ENCODE measurements at regions of chr12 and their contacts with region 1.

Region 1: DNA sequence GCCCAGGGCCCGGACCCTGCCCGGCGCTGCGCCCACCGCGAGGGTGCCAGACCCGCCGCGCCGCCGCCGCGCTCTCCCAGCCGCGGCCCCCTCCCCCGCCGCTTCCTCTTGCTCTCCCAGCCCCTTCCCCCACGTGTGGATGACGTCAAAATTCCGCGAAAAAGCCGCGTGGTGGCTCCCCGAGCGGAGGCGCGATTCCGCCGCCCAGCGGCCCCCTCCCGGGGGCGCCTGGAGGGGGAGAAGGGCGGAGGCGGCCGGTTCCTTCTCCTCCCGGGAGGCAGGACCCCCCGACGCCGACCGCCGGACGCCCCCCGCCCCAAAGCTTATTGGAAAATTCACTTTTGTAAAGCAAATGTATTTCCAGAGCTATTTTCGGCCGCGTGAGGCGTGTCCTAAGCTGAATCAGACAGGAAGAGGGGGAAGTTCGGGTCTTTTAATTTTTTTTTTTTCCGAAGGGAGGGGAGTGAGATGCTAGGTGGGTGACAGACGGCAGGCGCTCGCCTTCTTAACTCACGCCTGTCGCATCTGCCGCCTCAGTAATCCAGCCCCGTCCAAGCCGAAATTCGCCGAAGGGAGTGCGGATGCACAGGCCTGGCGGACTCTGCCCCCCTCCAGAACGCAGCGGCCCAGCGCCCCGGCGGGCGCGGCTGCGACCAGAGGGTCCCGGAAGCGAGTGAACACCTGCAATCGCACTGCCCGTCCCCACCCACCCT is 4.1 kb upstream of the CCND2 start:
- DNase-seq: peak; percentile 96
- ATAC-seq: peak; percentile 42
- H3K4me3 ChIP-seq: peak overlapping the region; percentile 64 to 90 (median 77)
- H3K4me3 Mint-ChIP-seq: peak overlapping the region; percentile 99
- H3K27ac ChIP-seq: peak overlapping the region; percentile 97 to 99
- H3K27ac Mint-ChIP-seq: peak overlapping the region; percentile 99
- H3K4me1 ChIP-seq: peaks cover 19 to 39% of the 10 kb centered on the region in 2 donors
- H3K4me1 Mint-ChIP-seq: peaks cover 28% of the 10 kb centered on the region
- H3K27me3 ChIP-seq: no peaks in the 10 kb centered on the region
- H3K27me3 Mint-ChIP-seq: no peaks in the 10 kb centered on the region
- CTCF ChIP-seq: no peak

Region 2: DNA sequence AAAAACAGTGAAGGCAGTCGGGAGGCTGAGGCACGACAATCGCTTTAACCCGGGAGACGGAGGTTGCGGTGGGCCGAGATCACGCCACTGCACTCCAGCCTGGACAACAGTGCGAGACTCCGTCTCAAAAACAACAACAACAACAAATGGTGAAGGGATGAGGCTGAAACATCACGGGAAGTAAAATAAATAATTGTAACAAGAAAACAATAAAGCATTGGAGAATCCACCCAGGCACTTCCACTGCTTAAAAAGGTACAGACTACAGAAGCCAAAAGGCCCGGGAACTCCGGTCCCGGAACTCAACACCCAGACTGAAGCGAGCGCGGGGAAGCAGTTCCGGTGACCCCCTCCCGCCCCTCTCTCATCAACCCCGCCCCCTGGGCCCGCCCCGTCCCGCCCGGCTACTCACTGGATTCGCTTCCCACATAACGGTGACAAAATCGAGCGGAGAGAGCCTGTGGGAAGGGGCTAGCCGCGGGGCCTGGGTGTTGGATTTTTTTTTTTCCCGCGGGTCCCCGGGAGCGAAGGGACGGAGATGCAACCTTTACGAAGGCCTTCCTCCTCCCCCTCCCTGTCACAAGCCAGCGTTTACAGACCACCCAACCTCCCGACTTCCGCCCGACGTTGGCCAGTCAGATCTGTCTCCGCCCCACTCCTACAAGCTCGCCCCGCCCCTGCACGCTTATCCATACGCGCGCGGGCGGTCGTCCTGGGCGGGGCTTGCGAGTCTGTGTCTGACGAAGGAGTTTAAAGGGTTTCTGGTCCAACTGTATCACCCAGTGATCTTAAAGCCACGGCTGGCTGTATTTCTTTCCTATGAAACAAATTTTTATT is 396.4 kb before region 1 on chr12 and contains the start of gene PARP11:
- CTCF ChIA-PET with region 1: no interaction called
- POLR2A ChIA-PET with region 1: interaction called, 6 read pairs
- intact Hi-C with region 1: loop called (anchors 1 kb)
- DNase-seq: peak; percentile 98
- ATAC-seq: peak; percentile 98
- H3K4me3 ChIP-seq: peak within 1 kb of the TSS; percentile 71 to 91 (median 75)
- H3K4me3 Mint-ChIP-seq: peak within 1 kb of the TSS; percentile 94
- H3K27ac ChIP-seq: peak within 1 kb of the TSS; percentile 90 to 93
- H3K27ac Mint-ChIP-seq: peak within 1 kb of the TSS; percentile 94
- H3K4me1 ChIP-seq: peaks cover 33 to 37% of the 10 kb centered on the region in 2 donors
- H3K4me1 Mint-ChIP-seq: peaks cover 46% of the 10 kb centered on the region
- H3K27me3 ChIP-seq: no peaks in the 10 kb centered on the region
- H3K27me3 Mint-ChIP-seq: peaks cover 5% of the 10 kb centered on the region
- CTCF ChIP-seq: no peak
- total RNA-seq, gene PARP11: 24.3 and 26.3 TPM in 2 replicates

Region 3: GRCh38 chr12:4030929-4031702 is 238.3 kb before region 1 on chr12:
- CTCF ChIA-PET with region 1: no interaction called
- POLR2A ChIA-PET with region 1: interaction called, 3 read pairs
- intact Hi-C with region 1: loop called (anchors 1 kb)
- DNase-seq: peak; percentile 81
- ATAC-seq: peak; percentile 97
- H3K4me3 ChIP-seq: peak overlapping the region in 4 of 5 experiments; percentile 51 to 61 (median 56)
- H3K4me3 Mint-ChIP-seq: peak overlapping the region; percentile 80
- H3K27ac ChIP-seq: no peak overlapping the region
- H3K27ac Mint-ChIP-seq: no peak overlapping the region
- H3K4me1 ChIP-seq: peaks cover 18 to 22% of the 10 kb centered on the region in 2 donors
- H3K4me1 Mint-ChIP-seq: peaks cover 20% of the 10 kb centered on the region
- H3K27me3 ChIP-seq: peaks cover 0 to 15% (median 6%) of the 10 kb centered on the region in 4 experiments
- H3K27me3 Mint-ChIP-seq: peaks cover 38% of the 10 kb centered on the region
- CTCF ChIP-seq: no peak

Region 4: DNA sequence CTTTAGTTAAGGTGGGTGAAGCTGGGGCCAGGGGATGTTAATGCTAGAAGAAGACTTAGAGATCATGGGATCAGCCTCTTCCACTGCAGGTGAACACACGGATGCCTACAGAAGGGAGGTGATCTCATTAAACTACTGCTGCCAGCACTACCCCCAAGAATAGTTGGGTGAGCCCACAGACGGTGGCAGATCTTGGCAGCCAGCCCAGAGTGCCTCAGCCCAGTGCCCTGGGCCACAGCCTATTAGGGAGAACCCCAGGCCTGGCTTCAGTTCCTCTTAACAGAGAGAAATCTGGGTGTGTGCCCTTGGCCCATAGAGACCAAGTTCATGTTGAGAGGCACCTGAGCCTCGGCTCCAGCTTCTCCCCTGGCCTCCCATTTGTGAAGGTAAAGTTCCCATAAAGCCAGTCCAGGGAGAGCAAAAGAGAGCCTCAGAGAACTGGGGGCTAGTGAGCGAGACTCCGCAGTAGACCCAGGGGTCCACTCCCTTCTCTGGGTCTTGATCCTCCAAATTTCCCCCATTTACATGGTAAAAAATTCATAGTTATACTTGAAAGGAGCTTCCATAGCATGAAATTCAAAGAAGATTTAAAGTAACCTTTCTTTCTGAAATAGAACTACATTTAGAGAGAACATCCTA is 120.9 kb before region 1 on chr12:
- CTCF ChIA-PET with region 1: interaction called, 116 read pairs
- POLR2A ChIA-PET with region 1: interaction called, 16 read pairs
- intact Hi-C with region 1: loop called (anchors 1 kb)
- DNase-seq: peak; percentile 96
- ATAC-seq: peak; percentile 89
- H3K4me3 ChIP-seq: peak overlapping the region in 1 of 5 experiments; percentile 6
- H3K4me3 Mint-ChIP-seq: peak overlapping the region; percentile 84
- H3K27ac ChIP-seq: peak overlapping the region; percentile 80 to 90
- H3K27ac Mint-ChIP-seq: peak overlapping the region; percentile 91
- H3K4me1 ChIP-seq: peaks cover 73 to 88% of the 10 kb centered on the region in 2 donors
- H3K4me1 Mint-ChIP-seq: peaks cover 90% of the 10 kb centered on the region
- H3K27me3 ChIP-seq: no peaks in the 10 kb centered on the region
- H3K27me3 Mint-ChIP-seq: no peaks in the 10 kb centered on the region
- CTCF ChIP-seq: no peak

Region 5: GRCh38 chr12:4210183-4210582 is 59.3 kb before region 1 on chr12:
- CTCF ChIA-PET with region 1: interaction called, 15 read pairs
- POLR2A ChIA-PET with region 1: interaction called, 7 read pairs
- intact Hi-C with region 1: loop called (anchors 1 kb)
- DNase-seq: no peak
- ATAC-seq: no peak
- H3K4me3 ChIP-seq: no peak overlapping the region
- H3K4me3 Mint-ChIP-seq: no peak overlapping the region
- H3K27ac ChIP-seq: no peak overlapping the region
- H3K27ac Mint-ChIP-seq: no peak overlapping the region
- H3K4me1 ChIP-seq: peaks cover 13% of the 10 kb centered on the region in 2 donors
- H3K4me1 Mint-ChIP-seq: peaks cover 22% of the 10 kb centered on the region
- H3K27me3 ChIP-seq: no peaks in the 10 kb centered on the region
- H3K27me3 Mint-ChIP-seq: no peaks in the 10 kb centered on the region
- CTCF ChIP-seq: no peak

Region 6: GRCh38 chr12:4303750-4304149 is 34.3 kb after region 1 on chr12:
- CTCF ChIA-PET with region 1: no interaction called
- POLR2A ChIA-PET with region 1: no interaction called
- intact Hi-C with region 1: no loop called
- DNase-seq: no peak
- ATAC-seq: no peak
- H3K4me3 ChIP-seq: no peak overlapping the region
- H3K4me3 Mint-ChIP-seq: no peak overlapping the region
- H3K27ac ChIP-seq: no peak overlapping the region
- H3K27ac Mint-ChIP-seq: no peak overlapping the region
- H3K4me1 ChIP-seq: no peaks in the 10 kb centered on the region
- H3K4me1 Mint-ChIP-seq: no peaks in the 10 kb centered on the region
- H3K27me3 ChIP-seq: no peaks in the 10 kb centered on the region
- H3K27me3 Mint-ChIP-seq: no peaks in the 10 kb centered on the region
- CTCF ChIP-seq: no peak